ENCODE measurements at regions of chr5 and their contacts with region 1.

Region 1: GRCh38 chr5:14727428-14727865 is 62.9 kb downstream of the OTULIN start:
- DNase-seq: peak; percentile 83
- ATAC-seq: peak; percentile 77
- H3K4me3 Mint-ChIP-seq: no peak overlapping the region
- H3K27ac Mint-ChIP-seq: no peak overlapping the region
- H3K4me1 Mint-ChIP-seq: peaks cover 2% of the 10 kb centered on the region
- H3K27me3 Mint-ChIP-seq: no peaks in the 10 kb centered on the region

Region 2: GRCh38 chr5:14316471-14316870 is 411.0 kb before region 1 on chr5:
- CTCF ChIA-PET with region 1: no interaction called
- POLR2A ChIA-PET with region 1: no interaction called
- DNase-seq: no peak
- ATAC-seq: no peak
- H3K4me3 Mint-ChIP-seq: no peak overlapping the region
- H3K27ac Mint-ChIP-seq: no peak overlapping the region
- H3K4me1 Mint-ChIP-seq: no peaks in the 10 kb centered on the region
- H3K27me3 Mint-ChIP-seq: peaks cover 4% of the 10 kb centered on the region

Region 3: GRCh38 chr5:14706615-14707021 is 20.8 kb before region 1 on chr5:
- CTCF ChIA-PET with region 1: interaction called, 29 read pairs
- POLR2A ChIA-PET with region 1: no interaction called
- DNase-seq: peak; percentile 51
- ATAC-seq: peak; percentile 93
- H3K4me3 Mint-ChIP-seq: peak overlapping the region; percentile 56
- H3K27ac Mint-ChIP-seq: peak overlapping the region; percentile 97
- H3K4me1 Mint-ChIP-seq: peaks cover 78% of the 10 kb centered on the region
- H3K27me3 Mint-ChIP-seq: no peaks in the 10 kb centered on the region

Region 4: DNA sequence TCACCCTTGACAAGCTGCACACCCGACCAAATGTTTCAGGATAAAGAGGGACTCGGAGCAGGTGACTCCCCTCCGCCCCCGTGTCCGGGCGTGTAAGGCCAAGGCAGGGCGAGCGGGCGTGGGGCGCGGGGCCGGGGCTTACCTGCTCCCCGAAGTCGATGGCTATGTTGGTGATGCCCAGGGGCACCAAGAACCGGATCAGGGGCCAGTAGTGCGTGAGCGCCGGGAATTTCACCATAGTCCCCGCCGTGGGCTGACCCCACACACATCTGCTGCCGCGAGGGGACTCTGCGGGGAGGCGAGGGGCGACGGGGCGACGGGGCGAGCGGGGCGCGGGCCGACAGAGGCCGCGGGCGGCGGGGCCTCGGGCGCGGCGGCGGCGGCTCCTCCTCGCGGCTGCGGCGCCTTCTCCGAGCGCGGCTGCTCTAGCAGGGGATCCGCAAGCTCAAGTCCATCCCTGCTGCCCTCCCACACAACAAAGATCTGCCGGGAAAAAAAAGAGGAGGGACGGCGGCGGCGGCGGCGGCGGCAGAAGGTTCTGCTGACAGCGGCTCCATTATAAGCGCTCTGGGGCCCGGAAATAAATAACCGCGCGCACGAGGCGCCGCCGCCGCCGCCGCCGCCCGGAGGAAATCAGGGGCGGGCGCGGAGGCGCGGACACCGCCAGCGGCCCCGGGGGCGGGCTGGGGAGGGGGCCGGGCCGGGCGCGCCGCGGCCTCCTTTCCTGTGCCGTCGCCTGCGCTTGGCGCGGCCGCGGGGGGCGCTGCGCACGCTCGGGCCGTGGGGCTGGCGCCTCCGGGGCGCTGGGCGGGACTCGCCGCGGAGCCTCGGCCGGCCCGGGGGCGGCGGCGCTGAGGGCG is 144.0 kb after region 1 on chr5 and contains the start of gene ANKH:
- CTCF ChIA-PET with region 1: interaction called, 24 read pairs
- POLR2A ChIA-PET with region 1: interaction called, 4 read pairs
- DNase-seq: peak; percentile 81
- ATAC-seq: peak; percentile 91
- H3K4me3 Mint-ChIP-seq: peak within 1 kb of the TSS; percentile 83
- H3K27ac Mint-ChIP-seq: peak within 1 kb of the TSS; percentile 83
- H3K4me1 Mint-ChIP-seq: peaks cover 28% of the 10 kb centered on the region
- H3K27me3 Mint-ChIP-seq: peaks cover 7% of the 10 kb centered on the region
- total RNA-seq, gene ANKH: 32.1 to 36.0 TPM

Region 5: DNA sequence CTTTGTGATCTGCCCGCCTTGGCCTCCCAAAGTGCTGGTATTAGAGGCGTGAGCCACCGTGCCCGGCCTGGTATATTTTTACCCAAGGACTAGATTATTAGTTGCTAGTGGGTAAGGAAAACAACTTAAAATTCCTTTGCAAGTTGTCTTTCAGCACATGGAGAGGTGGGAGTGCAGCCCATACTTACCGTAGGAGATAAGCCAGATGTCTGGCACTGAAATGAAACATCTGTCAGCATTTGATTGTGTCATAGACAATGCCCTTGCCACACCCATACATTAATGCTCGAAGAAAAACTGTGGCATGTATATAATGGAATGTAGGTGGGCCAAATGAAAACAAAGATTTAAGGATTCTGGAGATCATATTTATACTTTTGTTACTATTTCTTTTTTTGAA is 180.7 kb after region 1 on chr5:
- CTCF ChIA-PET with region 1: no interaction called
- POLR2A ChIA-PET with region 1: no interaction called
- DNase-seq: no peak
- ATAC-seq: no peak
- H3K4me3 Mint-ChIP-seq: no peak overlapping the region
- H3K27ac Mint-ChIP-seq: no peak overlapping the region
- H3K4me1 Mint-ChIP-seq: peaks cover 1% of the 10 kb centered on the region
- H3K27me3 Mint-ChIP-seq: peaks cover 12% of the 10 kb centered on the region

Region 6: DNA sequence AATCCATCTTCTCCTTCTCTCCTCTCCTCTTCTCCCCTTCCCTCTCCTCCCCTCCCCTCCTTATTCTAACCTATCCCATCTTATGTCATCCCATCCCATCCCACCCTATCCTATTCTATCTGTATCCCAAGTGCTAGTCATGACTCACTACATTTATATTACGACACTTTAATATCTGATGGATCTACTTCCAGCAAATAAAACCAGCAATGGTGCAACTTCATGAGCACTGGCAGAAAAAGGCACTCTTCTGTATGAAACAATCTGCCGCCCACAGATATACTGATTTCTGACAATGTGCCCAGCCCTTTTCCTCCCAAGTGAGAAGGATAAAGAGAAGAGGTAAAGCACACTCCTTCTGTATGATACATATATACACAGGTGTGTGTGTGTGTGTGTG is 230.7 kb after region 1 on chr5:
- CTCF ChIA-PET with region 1: interaction called, 10 read pairs
- POLR2A ChIA-PET with region 1: no interaction called
- DNase-seq: no peak
- ATAC-seq: no peak
- H3K4me3 Mint-ChIP-seq: no peak overlapping the region
- H3K27ac Mint-ChIP-seq: no peak overlapping the region
- H3K4me1 Mint-ChIP-seq: no peaks in the 10 kb centered on the region
- H3K27me3 Mint-ChIP-seq: peaks cover 4% of the 10 kb centered on the region

Region 7: DNA sequence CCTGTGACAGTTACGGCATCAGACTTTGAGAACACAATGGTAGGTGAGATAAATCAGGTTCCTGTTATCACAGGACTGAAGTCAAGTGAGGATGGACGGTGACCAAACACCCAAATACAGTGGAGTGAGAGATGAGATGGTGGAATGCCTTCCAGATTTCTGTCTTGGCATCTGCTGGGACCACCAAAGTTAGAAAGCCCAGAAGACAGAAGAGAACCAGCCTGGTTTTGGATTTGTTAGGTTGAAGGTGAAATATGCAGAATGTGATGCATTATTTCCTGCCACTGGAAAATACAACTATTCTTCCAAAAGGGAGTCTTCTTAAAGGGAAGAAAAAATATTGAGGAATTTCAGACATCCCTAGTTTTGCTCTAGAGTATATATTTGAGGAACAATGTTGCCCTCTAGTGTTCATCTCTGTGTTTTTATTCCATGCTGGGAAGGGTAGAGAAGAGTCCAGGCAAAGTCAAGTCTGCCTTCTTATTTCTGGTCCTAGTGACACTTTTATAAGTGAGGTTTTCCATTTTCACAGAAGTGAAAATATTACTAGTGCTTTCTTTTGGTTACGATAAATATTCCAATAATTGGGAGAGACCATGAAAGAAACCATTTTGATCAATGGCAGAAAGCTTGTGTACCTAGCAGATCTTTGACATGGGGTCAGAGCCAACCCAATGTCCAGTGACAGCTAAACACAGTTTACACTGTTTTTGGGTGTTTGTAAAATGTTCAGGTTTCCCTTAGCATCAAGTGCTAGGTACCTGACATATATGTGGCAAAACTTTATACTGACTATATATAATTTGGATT is 286.4 kb after region 1 on chr5:
- CTCF ChIA-PET with region 1: interaction called, 23 read pairs
- POLR2A ChIA-PET with region 1: no interaction called
- DNase-seq: no peak
- ATAC-seq: peak; percentile 57
- H3K4me3 Mint-ChIP-seq: no peak overlapping the region
- H3K27ac Mint-ChIP-seq: no peak overlapping the region
- H3K4me1 Mint-ChIP-seq: peaks cover 1% of the 10 kb centered on the region
- H3K27me3 Mint-ChIP-seq: peaks cover 6% of the 10 kb centered on the region

Region 8: GRCh38 chr5:15320896-15321295 is 593.4 kb after region 1 on chr5:
- CTCF ChIA-PET with region 1: no interaction called
- POLR2A ChIA-PET with region 1: no interaction called
- DNase-seq: no peak
- ATAC-seq: no peak
- H3K4me3 Mint-ChIP-seq: no peak overlapping the region
- H3K27ac Mint-ChIP-seq: no peak overlapping the region
- H3K4me1 Mint-ChIP-seq: no peaks in the 10 kb centered on the region
- H3K27me3 Mint-ChIP-seq: no peaks in the 10 kb centered on the region

Measured in activated CD8-positive, alpha-beta T cell treated with anti-CD3 and anti-CD28 coated beads, Interleukin-2, amount 10 ng/mL, durations not matched to agents 7 days and 5 days (primary cell).